ENCODE measurements at regions of chr2 and their contacts with region 1.

Region 1: DNA sequence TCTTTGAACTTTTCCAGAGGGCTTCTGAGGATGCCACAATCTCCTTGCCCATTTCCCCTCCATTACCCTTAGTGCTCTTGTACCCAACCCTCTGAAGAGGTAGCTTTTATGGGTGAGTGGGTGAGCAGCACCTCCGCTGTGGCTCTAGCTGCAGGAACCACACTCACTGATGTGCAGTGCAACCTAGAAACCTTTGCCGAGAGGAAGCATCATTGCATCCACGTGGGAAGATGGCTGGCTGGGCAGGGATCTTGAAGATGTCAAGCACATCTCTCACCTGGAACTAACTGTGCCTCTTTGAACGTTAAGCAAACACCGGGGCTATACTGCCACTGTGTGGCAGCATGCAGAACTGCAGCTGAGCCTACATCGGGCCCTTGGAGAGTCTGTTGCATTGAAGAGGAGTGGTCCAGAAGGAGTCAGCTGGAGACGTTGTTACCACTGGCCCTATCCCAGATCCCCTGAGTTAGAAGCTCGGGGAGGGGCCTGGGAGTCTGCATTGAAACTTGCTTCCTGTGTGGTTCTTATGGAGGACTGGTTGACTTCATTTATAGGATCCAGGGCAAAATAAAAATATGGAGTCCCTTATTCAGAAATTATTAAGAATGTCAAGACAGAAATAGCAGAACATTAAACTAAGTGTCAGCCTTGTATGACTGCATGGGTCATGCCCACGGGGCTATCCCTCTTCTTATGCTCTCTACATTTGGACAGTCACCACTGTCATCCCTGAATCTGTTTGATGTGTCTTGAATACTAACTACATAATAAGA is 28.7 kb downstream of the IGFBP5 start:
- DNase-seq: peak in 1 of 2 donors; percentile 65
- ATAC-seq: peak; percentile 85

Region 2: GRCh38 chr2:216023055-216023648 is 643.5 kb before region 1 on chr2:
- intact Hi-C with region 1: no loop called
- DNase-seq: peak in 1 of 2 donors; percentile 49
- ATAC-seq: peak; percentile 81

Region 3: GRCh38 chr2:216516730-216517350 is 149.8 kb before region 1 on chr2:
- intact Hi-C with region 1: loop called (anchors 2 to 5 kb)
- DNase-seq: no peak
- ATAC-seq: peak; percentile 64

Measured in left colon (tissue), 2 donors.